ENCODE measurements at regions of chr13 and their contacts with region 1.

Region 1: DNA sequence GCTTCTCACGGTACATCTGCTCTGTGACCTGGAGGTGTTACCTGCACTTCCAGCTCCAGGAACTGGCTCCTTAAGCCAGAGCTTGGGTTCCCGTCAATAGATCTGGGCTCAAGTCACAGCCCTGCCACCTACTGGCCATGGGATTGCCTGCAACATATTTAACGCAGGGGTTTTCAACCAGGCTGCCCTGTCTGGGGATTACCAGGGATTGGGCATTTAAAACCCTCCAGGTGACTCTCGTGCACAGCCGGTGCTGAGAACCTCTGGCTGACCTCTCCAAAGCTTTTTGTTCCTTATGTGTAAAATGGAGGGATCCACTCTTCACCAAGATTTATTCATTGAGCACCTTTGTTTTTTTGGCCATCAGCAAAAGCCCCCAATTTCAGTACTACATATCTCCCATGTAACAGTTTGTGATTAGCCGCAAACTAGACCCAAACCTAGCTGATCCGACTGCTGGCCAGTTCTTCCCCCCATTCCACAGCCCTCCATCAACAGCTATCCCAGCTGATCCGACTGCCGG is 76.6 kb upstream of the STK24 start:
- DNase-seq: peak; percentile 10
- H3K4me3 ChIP-seq: no peak overlapping the region
- H3K27ac ChIP-seq: peak overlapping the region in 3 of 4 donors; percentile 23 to 53 (median 33)
- H3K4me1 ChIP-seq: peaks cover 0 to 51% (median 11%) of the 10 kb centered on the region in 3 donors
- H3K27me3 ChIP-seq: no peaks in the 10 kb centered on the region
- CTCF ChIP-seq: peak; percentile 83 to 96 (median 94)
- POLR2A ChIP-seq: no peak

Region 2: DNA sequence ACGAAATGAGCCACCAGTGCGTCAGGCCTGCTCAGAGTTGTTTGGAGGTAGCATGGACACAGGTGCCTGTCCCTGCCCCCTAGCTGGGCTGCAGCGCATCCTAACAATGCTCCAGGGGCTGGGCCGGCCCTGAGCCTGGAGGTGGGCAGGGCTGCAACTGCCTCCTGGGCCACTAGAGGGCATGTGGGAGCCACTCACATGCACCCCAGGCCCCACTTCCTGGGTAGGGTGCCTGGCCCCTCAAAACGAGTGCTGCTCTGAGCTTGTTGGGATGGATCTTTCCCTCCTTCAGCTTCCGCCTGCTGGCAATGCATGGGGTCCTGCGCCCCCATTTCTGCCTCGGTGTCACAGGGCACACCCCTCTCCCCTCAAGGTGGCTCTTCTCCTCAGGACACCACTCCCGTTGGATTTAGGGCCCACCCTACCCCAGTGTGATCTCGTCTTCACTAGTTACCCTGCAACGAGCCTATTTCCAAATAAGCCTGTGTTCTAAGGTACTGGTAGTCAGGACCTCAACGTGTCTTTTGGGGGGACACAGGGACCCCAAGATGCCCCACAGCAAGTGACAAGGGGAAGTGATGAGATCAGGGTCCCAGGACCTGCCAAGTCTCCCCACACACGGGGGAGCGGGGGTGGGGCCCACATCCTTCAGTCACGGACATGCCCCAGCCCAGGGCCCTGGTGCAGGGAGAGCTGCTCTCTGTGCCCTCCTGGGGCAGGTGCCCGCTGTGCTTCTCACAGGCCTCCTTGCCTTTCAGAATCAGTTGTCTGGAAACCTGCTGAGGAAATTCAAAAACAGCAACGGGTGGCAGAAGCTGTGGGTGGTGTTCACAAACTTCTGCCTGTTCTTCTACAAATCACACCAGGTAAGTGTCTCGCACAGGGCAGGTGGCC is 207.9 kb before region 1 on chr13:
- intact Hi-C with region 1: loop called (anchors 5 kb)
- DNase-seq: no peak
- H3K4me3 ChIP-seq: peak overlapping the region in 1 of 4 donors; percentile 21
- H3K27ac ChIP-seq: peak overlapping the region; percentile 32 to 85 (median 51)
- H3K4me1 ChIP-seq: peaks cover 0 to 44% (median 16%) of the 10 kb centered on the region in 3 donors
- H3K27me3 ChIP-seq: no peaks in the 10 kb centered on the region
- CTCF ChIP-seq: peak; percentile 92 to 97 (median 94)
- POLR2A ChIP-seq: no peak

Region 3: GRCh38 chr13:98584668-98585391 is 68.7 kb before region 1 on chr13:
- intact Hi-C with region 1: loop called (anchors 5 kb)
- DNase-seq: no peak
- H3K4me3 ChIP-seq: no peak overlapping the region
- H3K27ac ChIP-seq: peak overlapping the region; percentile 37 to 74 (median 70)
- H3K4me1 ChIP-seq: peaks cover 21 to 61% (median 28%) of the 10 kb centered on the region in 3 donors
- H3K27me3 ChIP-seq: no peaks in the 10 kb centered on the region
- CTCF ChIP-seq: no peak
- POLR2A ChIP-seq: no peak